ENCODE measurements at regions of chr19 and their contacts with region 1.

Region 1: GRCh38 chr19:4267101-4267900 is 11.8 kb upstream of the SHD start:
- DNase-seq: peak; percentile 66
- ATAC-seq: peak; percentile 43
- H3K4me3 Mint-ChIP-seq: no peak overlapping the region
- H3K27ac Mint-ChIP-seq: peak overlapping the region; percentile 53
- H3K4me1 Mint-ChIP-seq: peaks cover 29% of the 10 kb centered on the region
- H3K27me3 Mint-ChIP-seq: no peaks in the 10 kb centered on the region

Region 2: DNA sequence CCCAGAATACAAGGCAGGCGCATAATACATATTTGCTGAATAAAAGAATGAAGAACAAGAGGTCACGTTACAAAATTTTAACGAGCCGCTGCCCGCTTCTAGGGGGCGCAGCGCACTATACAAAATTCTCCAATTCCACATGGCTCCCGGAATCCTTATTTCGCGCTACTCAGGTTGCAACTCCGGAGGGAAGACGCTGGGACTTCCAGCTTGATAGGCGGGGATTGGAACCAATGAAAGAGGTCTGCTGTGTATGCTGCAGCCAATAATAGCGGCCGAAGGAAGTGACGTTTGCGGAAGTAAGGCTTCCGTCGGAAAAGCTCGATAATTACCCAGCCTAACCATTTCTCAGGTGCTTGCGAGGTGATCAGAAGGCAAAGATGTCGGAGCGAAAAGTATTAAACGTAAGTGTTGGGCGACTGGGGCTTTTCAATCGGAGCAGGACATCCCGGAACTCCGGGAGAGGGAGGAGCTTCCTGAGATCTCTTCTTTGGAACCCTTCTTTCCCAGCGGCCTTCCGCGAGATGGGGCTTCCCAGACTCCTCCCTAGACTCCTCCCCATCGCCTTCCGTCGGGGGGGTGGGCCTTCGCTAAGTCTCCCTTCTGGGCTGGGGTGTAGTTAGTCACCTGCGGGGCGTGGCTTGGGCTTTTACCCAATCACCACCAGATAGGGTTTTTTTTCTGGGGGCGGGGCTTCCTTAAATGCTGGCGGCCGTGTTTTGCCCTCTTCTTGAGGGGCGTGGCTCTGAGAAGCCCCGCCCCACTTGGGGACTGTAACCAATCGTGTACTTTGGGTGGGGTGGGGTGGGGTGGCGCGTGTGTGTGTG is 20.3 kb before region 1 on chr19 and contains the start of gene YJU2:
- POLR2A ChIA-PET with region 1: interaction called, 13 read pairs
- DNase-seq: peak; percentile 94
- ATAC-seq: peak; percentile 94
- H3K4me3 Mint-ChIP-seq: peak within 1 kb of the TSS; percentile 93
- H3K27ac Mint-ChIP-seq: peak within 1 kb of the TSS; percentile 98
- H3K4me1 Mint-ChIP-seq: peaks cover 6% of the 10 kb centered on the region
- H3K27me3 Mint-ChIP-seq: no peaks in the 10 kb centered on the region
- total RNA-seq, gene YJU2: 27.9 to 29.0 TPM

Region 3: DNA sequence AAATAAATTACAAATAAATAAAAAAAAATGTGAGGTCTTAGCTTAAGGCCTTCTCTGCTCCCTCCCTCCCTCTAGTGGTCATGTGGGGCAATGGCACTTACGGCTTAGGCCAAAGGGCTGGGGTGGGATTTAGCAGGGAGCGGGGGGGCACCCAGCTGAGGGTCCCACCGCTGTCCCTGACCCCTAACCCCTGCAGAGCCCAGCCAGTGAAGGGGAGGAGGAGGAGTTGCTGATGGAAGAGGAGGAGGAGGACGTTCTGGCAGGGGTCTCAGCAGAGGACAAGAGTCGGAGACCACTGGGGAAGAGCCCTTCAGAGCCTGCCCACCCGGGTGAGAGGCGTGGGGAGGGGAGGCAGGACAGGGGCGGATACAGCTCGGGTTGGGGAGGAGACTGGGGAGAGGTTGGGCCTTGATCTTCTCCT is 85.4 kb after region 1 on chr19:
- POLR2A ChIA-PET with region 1: interaction called, 10 read pairs
- DNase-seq: peak; percentile 60
- ATAC-seq: peak; percentile 67
- H3K4me3 Mint-ChIP-seq: no peak overlapping the region
- H3K27ac Mint-ChIP-seq: peak overlapping the region; percentile 54
- H3K4me1 Mint-ChIP-seq: peaks cover 4% of the 10 kb centered on the region
- H3K27me3 Mint-ChIP-seq: no peaks in the 10 kb centered on the region

Measured in activated naive CD8-positive, alpha-beta T cell treated with anti-CD3 and anti-CD28 coated beads, Interleukin-2, amount 10 ng/mL, durations not matched to agents 7 days and 5 days (primary cell).